ENCODE measurements at regions of chr2 and their contacts with region 1.

Region 1: GRCh38 chr2:106104332-106105062 is 89.6 kb downstream of the UXS1 start:
- DNase-seq: peak; percentile 64
- H3K4me3 Mint-ChIP-seq: no peak overlapping the region
- H3K27ac Mint-ChIP-seq: no peak overlapping the region
- H3K4me1 Mint-ChIP-seq: no peaks in the 10 kb centered on the region
- H3K27me3 Mint-ChIP-seq: no peaks in the 10 kb centered on the region
- CTCF ChIP-seq: peak; percentile 78

Region 2: GRCh38 chr2:106193977-106194778 is 89.7 kb after region 1 on chr2 and contains the start of gene UXS1:
- CTCF ChIA-PET with region 1: interaction called, 3 read pairs
- intact Hi-C with region 1: loop called (anchors 1 kb)
- DNase-seq: peak; percentile 97
- H3K4me3 Mint-ChIP-seq: peak within 1 kb of the TSS; percentile 74
- H3K27ac Mint-ChIP-seq: peak within 1 kb of the TSS; percentile 76
- H3K4me1 Mint-ChIP-seq: peaks cover 40% of the 10 kb centered on the region
- H3K27me3 Mint-ChIP-seq: no peaks in the 10 kb centered on the region
- CTCF ChIP-seq: no peak
- total RNA-seq, gene UXS1: 71.1 and 87.7 TPM in 2 replicates

Region 3: DNA sequence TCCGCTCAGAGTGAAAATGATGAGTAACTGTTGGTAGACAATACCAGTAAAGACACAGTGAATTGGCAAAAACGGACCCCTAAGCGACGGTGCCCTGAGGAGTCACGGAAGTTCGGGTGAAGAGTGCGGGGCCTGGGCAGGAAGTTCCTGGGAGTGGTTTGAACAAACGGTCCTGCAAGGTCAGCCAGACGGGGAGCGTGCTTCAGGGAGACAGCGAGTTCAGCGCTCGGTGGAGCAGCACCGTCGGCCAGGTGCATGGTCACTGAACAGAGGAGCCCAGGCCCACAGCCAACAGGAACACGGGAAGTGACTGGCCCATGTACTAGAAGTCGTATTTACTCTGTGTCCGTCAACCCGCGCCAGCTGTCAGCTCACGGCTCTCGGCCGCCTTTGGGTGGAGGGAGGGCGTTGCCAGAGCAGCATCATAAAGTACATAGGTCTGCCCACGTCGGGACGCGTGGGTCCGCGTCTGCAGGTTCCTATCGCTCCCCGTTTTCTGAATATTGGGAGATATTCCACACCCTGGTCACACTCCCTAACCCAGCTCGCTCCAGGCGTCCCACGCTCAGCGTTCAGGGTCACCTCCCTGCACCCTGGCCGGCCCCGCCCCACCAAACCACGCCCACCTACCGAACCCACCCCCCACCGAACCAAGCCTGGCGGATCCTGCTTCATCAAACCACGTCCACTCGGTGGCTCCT is 165.2 kb after region 1 on chr2:
- CTCF ChIA-PET with region 1: no interaction called
- intact Hi-C with region 1: loop called (anchors 10 kb)
- DNase-seq: peak; percentile 52
- H3K4me3 Mint-ChIP-seq: peak overlapping the region; percentile 83
- H3K27ac Mint-ChIP-seq: no peak overlapping the region
- H3K4me1 Mint-ChIP-seq: peaks cover 9% of the 10 kb centered on the region
- H3K27me3 Mint-ChIP-seq: no peaks in the 10 kb centered on the region
- CTCF ChIP-seq: no peak

Region 4: DNA sequence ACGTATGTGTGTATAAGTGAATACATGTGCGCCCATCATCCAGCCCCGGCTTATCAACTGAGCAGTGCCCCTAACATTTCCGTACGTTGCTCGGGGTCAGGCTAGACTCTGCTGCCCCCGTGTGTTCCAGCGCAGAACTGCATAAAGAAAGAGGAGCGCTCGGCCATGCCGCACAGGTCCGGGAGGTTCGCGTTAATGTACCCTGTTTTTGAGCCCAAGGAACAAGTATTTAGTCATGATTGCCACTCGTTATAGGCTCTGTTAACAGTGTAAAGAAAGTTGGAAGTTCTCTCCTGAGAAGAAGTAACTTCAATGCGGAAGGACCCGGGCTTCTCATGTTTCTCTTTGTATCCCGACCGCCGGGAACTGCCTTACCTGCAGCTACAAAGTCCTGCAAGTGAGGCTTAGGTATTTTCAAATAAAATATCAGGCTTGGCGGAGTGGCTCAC is 438.3 kb after region 1 on chr2:
- CTCF ChIA-PET with region 1: no interaction called
- intact Hi-C with region 1: loop called (anchors 2 kb)
- DNase-seq: peak; percentile 83
- H3K4me3 Mint-ChIP-seq: peak overlapping the region; percentile 62
- H3K27ac Mint-ChIP-seq: peak overlapping the region; percentile 66
- H3K4me1 Mint-ChIP-seq: no peaks in the 10 kb centered on the region
- H3K27me3 Mint-ChIP-seq: peaks cover 40% of the 10 kb centered on the region
- CTCF ChIP-seq: peak; percentile 77

Region 5: GRCh38 chr2:106582148-106583143 is 477.9 kb after region 1 on chr2:
- CTCF ChIA-PET with region 1: interaction called, 4 read pairs
- intact Hi-C with region 1: loop called (anchors 10 kb)
- DNase-seq: peak; percentile 74
- H3K4me3 Mint-ChIP-seq: peak overlapping the region; percentile 43
- H3K27ac Mint-ChIP-seq: no peak overlapping the region
- H3K4me1 Mint-ChIP-seq: peaks cover 9% of the 10 kb centered on the region
- H3K27me3 Mint-ChIP-seq: peaks cover 48% of the 10 kb centered on the region
- CTCF ChIP-seq: peak; percentile 67

Measured in Calu3 (cell line).